ENCODE measurements at regions of chr17 and their contacts with region 1.

Region 1: DNA sequence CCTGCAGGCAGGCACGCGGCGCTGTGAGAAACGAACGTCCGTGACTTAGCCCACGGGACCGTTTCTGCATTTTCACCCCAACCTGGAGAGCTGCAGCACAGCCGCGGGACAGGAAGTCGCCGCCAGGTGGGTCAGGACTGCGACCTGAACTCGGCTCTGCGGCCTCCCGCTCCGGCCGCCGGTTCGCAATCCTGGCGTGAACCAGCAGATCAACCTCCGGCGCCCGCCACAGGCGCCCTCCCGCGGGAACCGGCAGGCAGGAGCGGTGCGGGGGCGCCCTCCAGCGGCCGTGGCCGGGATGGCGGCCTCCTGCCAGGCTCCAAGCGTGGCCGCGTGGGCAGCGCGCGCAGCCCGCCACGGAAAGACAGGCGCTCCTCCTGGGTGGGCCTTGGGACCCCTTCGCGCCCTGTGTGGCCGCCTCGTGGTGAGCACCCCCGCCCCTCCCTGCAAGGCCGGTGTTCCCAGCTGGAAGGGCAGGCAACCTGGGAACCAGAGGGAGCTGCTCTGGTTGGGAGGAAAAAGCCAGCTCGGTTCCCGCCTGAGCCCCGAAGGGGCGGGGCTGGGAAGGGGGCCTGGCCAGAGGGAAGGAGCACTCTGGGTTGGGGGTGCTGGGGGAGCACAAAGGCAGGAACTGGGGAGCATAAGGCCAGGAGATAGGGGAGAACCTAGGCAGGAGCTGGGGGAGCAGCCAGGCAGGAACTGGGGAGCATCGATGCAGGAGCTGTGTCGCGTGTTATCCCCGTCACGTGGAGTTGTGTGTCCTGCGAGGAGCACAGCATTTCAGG is 28.2 kb downstream of the ACTG1 start:
- DNase-seq: peak; percentile 93 to 96
- H3K4me3 ChIP-seq: peak overlapping the region; percentile 36 to 56 (median 39)
- H3K27ac ChIP-seq: no peak overlapping the region
- H3K4me1 ChIP-seq: peaks cover 47 to 75% (median 56%) of the 10 kb centered on the region in 4 donors
- H3K27me3 ChIP-seq: peaks cover 0 to 32% (median 3%) of the 10 kb centered on the region in 3 donors
- CTCF ChIP-seq: peak in 5 of 7 experiments; percentile 70 to 100 (median 100)
- EP300 ChIP-seq: no peak
- POLR2A ChIP-seq: no peak

Region 2: DNA sequence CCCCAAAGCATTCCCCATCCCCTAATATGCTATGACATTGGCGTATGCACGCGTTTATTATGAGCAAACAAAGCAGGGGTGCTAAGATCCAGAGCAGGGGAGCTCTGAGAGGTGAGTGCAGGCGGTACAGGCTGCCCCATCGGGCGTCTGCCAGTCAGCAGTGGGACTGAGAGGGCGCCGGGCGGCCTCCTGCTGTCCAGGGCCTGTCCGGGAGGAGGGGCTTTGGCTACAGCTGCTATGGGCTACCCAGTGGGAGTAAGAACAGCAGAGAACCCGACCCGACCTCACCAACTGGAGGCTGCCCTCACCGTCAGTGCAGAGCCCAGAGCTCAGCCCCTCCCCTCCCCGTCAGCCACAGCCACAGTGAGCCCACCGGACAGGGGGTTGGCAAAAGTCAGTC is 299.8 kb before region 1 on chr17:
- intact Hi-C with region 1: no loop called
- DNase-seq: no peak
- H3K4me3 ChIP-seq: no peak overlapping the region
- H3K27ac ChIP-seq: no peak overlapping the region
- H3K4me1 ChIP-seq: no peaks in the 10 kb centered on the region
- H3K27me3 ChIP-seq: peaks cover 0 to 48% (median 0%) of the 10 kb centered on the region in 3 donors
- CTCF ChIP-seq: no peak
- EP300 ChIP-seq: no peak
- POLR2A ChIP-seq: no peak

Region 3: GRCh38 chr17:81309070-81309905 is 175.1 kb before region 1 on chr17:
- intact Hi-C with region 1: loop called (anchors 10 kb)
- DNase-seq: peak; percentile 90 to 95
- H3K4me3 ChIP-seq: peak overlapping the region; percentile 1 to 33 (median 22)
- H3K27ac ChIP-seq: peak overlapping the region; percentile 55 to 81 (median 67)
- H3K4me1 ChIP-seq: peaks cover 13 to 18% (median 16%) of the 10 kb centered on the region in 4 donors
- H3K27me3 ChIP-seq: no peaks in the 10 kb centered on the region
- CTCF ChIP-seq: peak in 5 of 7 experiments; percentile 24 to 79 (median 46)
- EP300 ChIP-seq: no peak
- POLR2A ChIP-seq: no peak

Region 4: GRCh38 chr17:81401723-81402529 is 82.5 kb before region 1 on chr17:
- intact Hi-C with region 1: loop called (anchors 10 kb)
- DNase-seq: peak in 1 of 2 donors; percentile 71
- H3K4me3 ChIP-seq: peak overlapping the region in 2 of 4 donors; percentile 71 to 78
- H3K27ac ChIP-seq: peak overlapping the region; percentile 37 to 99 (median 95)
- H3K4me1 ChIP-seq: peaks cover 48 to 84% (median 68%) of the 10 kb centered on the region in 4 donors
- H3K27me3 ChIP-seq: peaks cover 0 to 38% (median 10%) of the 10 kb centered on the region in 3 donors
- CTCF ChIP-seq: peak in 1 of 7 experiments; percentile 15
- EP300 ChIP-seq: no peak
- POLR2A ChIP-seq: no peak

Region 5: DNA sequence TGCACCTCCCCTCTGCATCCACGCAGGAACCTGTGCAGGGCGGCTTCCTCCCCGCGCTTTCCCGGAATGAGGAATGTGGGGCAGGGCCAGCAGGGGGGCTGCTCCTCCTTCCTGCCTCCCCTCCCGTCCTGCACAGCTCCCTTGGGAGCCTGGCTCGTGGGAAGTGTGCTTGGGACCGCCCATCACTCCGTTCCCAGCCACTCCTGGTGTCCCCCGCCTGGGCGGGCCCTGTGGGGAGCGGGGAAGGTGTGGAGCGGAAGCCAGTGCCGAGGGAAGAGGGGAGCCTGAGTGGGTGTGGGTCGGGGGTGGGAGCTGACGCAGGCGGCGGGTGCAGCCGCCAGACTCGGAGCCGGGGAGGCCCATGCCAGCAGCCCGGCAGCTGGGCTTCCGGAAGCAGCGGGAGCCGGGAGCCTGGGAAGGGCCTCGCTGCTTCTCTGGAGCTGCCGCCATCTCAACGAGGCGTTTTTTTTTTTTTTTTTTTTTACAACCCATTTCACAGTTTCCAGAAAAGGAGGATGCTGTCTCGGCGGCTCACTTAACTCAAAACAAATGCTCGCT is 65.0 kb before region 1 on chr17:
- intact Hi-C with region 1: no loop called
- DNase-seq: peak; percentile 84 to 95
- H3K4me3 ChIP-seq: peak overlapping the region; percentile 14 to 28 (median 20)
- H3K27ac ChIP-seq: peak overlapping the region; percentile 86 to 95 (median 92)
- H3K4me1 ChIP-seq: peaks cover 74 to 79% (median 78%) of the 10 kb centered on the region in 4 donors
- H3K27me3 ChIP-seq: no peaks in the 10 kb centered on the region
- CTCF ChIP-seq: no peak
- EP300 ChIP-seq: peak; percentile 66
- POLR2A ChIP-seq: no peak

Region 6: GRCh38 chr17:81429786-81430551 is 54.4 kb before region 1 on chr17:
- intact Hi-C with region 1: loop called (anchors 10 kb)
- DNase-seq: peak in 1 of 2 donors; percentile 84
- H3K4me3 ChIP-seq: peak overlapping the region; percentile 11 to 34 (median 20)
- H3K27ac ChIP-seq: peak overlapping the region; percentile 30 to 91 (median 86)
- H3K4me1 ChIP-seq: peaks cover 59 to 71% (median 68%) of the 10 kb centered on the region in 4 donors
- H3K27me3 ChIP-seq: peaks cover 0 to 34% (median 4%) of the 10 kb centered on the region in 3 donors
- CTCF ChIP-seq: no peak
- EP300 ChIP-seq: no peak
- POLR2A ChIP-seq: no peak

Region 7: DNA sequence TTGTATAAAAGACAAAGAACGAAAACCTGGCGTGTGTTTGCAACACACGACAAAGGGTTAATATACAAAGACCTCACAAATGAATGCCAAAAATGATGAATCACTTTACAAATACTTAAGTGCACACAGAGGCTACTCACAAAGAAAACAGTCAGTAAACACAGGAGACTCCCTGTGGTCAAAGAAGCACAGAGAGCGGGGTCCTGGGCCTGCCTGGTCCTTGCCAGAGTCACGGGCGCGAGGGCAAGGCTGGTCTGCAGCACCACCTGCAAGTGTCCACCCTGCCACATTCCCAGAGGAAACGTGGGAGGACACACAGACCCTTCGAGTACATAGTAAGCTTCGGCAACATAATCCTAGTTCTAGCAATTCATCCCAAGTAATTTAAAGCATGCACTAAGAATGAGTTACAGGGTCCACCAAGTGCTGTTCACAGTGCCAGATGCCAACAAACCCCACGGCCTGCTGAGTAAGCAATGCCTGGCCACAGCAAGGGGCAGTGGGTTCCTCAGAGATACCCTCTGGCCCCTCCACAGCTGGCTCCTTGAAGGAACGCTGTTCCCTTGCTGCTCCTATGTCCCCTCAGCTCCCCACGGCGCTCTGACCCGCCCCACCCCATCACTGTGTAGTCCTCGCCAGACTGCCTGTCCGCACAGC is 92.4 kb after region 1 on chr17:
- intact Hi-C with region 1: no loop called
- DNase-seq: peak in 1 of 2 donors; percentile 34
- H3K4me3 ChIP-seq: peak overlapping the region in 1 of 4 donors; percentile 8
- H3K27ac ChIP-seq: peak overlapping the region; percentile 24 to 81 (median 55)
- H3K4me1 ChIP-seq: peaks cover 25 to 35% (median 31%) of the 10 kb centered on the region in 4 donors
- H3K27me3 ChIP-seq: no peaks in the 10 kb centered on the region
- CTCF ChIP-seq: no peak
- EP300 ChIP-seq: no peak
- POLR2A ChIP-seq: no peak

Measured in stomach (tissue), 19 donors.